Dorsolateral prefrontal cortex (tissue), 120 donors: ENCODE measurements at regions of chr16 and their contacts with region 1.

Region 1: GRCh38 chr16:35689764-35690163 is 2230.4 kb downstream of the TP53TG3F start:
- DNase-seq: no peak
- H3K4me3 ChIP-seq: no peak overlapping the region
- H3K27ac ChIP-seq: no peak overlapping the region
- H3K27me3 ChIP-seq: peaks cover 0 to 19% (median 0%) of the 10 kb centered on the region in 45 donors
- CTCF ChIP-seq: no peak

Region 2: DNA sequence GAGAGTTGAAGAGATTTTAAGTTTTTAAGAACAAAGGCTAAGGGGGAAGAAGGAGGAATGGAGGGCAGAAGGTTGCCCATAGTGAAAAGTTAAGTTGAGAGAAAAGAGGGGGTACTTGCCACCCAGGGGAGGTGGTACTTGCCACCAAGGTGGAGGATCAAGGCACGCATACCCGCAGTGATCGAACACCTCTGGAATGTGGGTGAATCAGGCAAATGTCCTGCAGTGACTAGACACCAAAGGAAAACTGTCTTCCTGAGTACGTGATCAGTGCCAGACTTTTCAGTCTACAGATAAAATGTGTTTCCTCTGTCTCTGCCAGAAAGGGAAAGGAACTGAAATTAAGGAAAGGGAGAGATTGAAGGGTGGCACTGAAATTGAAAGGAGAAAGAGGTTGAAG is 55.0 kb after region 1 on chr16:
- intact Hi-C with region 1: loop called in 1 of 2 experiments (anchors 10 kb)
- DNase-seq: no peak
- H3K4me3 ChIP-seq: no peak overlapping the region
- H3K27ac ChIP-seq: no peak overlapping the region
- H3K27me3 ChIP-seq: peaks cover 0 to 8% (median 0%) of the 10 kb centered on the region in 45 donors
- CTCF ChIP-seq: no peak